Endothelial cell of umbilical vein (primary cell): ENCODE measurements at regions of chr1 and their contacts with region 1.

Region 1: DNA sequence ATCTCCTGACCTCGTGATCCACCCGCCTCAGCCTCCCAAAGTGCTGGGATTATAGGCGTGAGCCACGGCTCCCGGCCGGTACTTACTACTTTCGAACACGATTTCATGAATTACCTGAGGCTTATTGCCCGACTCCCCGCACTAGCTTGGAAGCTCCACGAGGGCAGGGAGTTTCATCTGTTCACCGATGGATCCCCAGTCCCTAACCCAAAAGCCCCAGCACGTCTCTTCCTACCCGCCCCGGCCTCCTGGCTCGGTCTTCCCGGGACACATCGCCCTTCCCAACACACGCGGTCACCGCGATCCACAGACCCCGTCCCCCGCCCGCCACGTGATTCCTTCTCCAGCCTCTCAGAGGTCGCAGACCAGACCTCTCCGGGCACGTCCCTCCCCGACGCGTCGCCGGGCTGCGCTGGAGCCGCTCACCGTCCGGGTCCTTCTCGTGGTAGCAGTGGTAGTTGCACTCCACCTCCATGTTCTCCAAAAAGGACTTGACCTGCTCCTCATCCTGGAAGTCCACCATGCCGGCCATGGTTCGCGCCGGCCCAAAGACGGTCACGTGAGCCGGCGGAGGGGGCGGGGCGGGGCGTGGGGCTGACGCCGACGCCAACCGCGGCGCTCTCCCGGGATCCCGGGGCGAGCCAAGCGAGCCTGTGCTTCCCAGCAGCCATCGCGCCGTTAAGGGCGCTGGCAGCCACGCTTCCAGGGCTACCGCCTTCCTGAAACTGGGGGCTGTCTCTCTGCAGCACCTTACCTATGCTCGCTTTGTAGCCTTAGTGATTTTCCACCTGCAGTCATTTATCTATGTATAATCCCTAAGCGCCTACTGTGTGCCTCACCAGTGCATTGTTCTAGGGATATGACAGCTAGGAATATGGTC is at the start of gene COA7:
- DNase-seq: peak; percentile 88
- H3K4me3 ChIP-seq: peak within 1 kb of the TSS; percentile 30 to 72 (median 65)
- H3K27ac ChIP-seq: peak within 1 kb of the TSS; percentile 56
- H3K4me1 ChIP-seq: peaks cover 13% of the 10 kb centered on the region
- H3K27me3 ChIP-seq: no peaks in the 10 kb centered on the region
- CTCF ChIP-seq: no peak
- POLR2A ChIP-seq: peak; percentile 85
- total RNA-seq, gene COA7: 28.6 and 30.6 TPM in 2 replicates

Region 2: GRCh38 chr1:52726265-52727113 is 28.5 kb after region 1 on chr1 and contains the start of gene ZYG11B:
- CTCF ChIA-PET with region 1: interaction called, 6 read pairs
- POLR2A ChIA-PET with region 1: no interaction called
- dilution Hi-C with region 1: no loop called
- intact Hi-C with region 1: loop called (anchors 2 kb)
- DNase-seq: peak; percentile 85
- H3K4me3 ChIP-seq: peak within 1 kb of the TSS; percentile 77 to 99 (median 87)
- H3K27ac ChIP-seq: peak within 1 kb of the TSS; percentile 2
- H3K4me1 ChIP-seq: peaks cover 3% of the 10 kb centered on the region
- H3K27me3 ChIP-seq: peaks cover 0 to 5% of the 10 kb centered on the region in 2 experiments
- CTCF ChIP-seq: no peak
- POLR2A ChIP-seq: peak; percentile 89
- total RNA-seq, gene ZYG11B: 27.0 and 27.2 TPM in 2 replicates

Region 3: GRCh38 chr1:52970149-52970548 is 272.1 kb after region 1 on chr1:
- CTCF ChIA-PET with region 1: no interaction called
- POLR2A ChIA-PET with region 1: no interaction called
- dilution Hi-C with region 1: no loop called
- intact Hi-C with region 1: no loop called
- DNase-seq: peak; percentile 16
- H3K4me3 ChIP-seq: no peak overlapping the region
- H3K27ac ChIP-seq: no peak overlapping the region
- H3K4me1 ChIP-seq: no peaks in the 10 kb centered on the region
- H3K27me3 ChIP-seq: no peaks in the 10 kb centered on the region
- CTCF ChIP-seq: peak in 1 of 2 donors; percentile 1
- POLR2A ChIP-seq: no peak